Caco-2 (cell line): ENCODE measurements at regions of chr13 and their contacts with region 1.

Region 1: DNA sequence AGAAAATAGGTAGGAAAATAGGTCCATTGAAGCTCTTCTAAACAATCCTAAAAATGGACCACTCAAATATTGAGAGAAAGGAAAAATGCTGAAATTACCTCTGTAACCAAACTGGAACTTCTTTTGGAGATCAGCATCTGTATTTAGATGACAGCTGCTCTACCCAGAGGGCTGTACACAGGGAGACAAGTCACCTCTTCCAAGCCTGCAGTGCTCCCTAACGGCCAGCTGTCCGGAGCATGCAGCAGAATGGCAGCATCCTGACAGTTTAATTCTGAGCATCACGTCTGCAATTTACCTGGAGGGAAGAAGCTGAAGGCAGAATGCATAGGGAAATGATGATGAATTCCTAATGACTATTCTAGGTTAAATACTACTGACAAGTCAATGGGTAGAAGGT is 62.8 kb upstream of the DIAPH3 start:
- DNase-seq: peak; percentile 69 to 79
- H3K4me3 ChIP-seq: no peak overlapping the region
- H3K4me3 Mint-ChIP-seq: no peak overlapping the region
- H3K27ac Mint-ChIP-seq: no peak overlapping the region
- H3K4me1 ChIP-seq: peaks cover 25% of the 10 kb centered on the region
- H3K4me1 Mint-ChIP-seq: peaks cover 27% of the 10 kb centered on the region
- H3K27me3 ChIP-seq: no peaks in the 10 kb centered on the region
- H3K27me3 Mint-ChIP-seq: no peaks in the 10 kb centered on the region
- CTCF ChIP-seq: peak; percentile 55 to 76

Region 2: DNA sequence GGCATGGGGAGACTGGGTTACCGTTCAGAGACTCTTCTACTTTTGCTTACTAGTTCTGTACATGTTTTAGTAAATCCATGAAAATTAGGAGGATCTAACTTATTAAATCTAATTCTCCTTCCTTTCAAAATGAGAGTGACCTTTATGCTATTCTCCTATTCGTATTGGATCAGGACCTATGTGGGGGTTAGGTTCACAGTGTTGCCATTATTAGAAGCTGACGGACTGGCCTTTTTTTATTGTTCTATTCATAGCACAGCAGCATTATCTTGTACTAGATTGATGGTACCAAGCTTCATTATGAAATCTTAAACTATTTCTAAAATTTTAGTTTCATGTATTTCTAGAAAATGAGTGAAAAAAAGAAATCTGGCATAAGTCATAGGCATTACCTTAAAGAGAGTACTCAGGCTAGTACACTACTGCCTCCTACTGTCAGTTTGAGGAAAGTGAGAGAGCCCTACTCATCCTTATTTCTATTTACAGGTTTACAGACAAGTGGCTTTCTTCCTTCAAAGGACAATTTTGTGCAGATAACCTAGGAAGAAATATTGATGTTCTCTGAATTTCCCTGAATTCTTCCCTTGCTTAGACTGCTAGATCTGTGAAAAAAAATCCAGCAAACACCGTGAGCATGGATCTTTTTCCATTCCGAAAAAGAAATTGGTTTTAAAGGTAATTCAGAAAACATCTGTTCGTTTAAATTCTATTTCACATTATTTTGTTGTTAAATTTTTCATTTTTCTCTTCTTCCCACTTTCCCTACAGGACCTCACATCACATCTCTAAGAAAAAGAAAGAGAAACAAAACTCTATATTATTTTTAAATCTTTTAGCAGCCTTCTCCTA is 548.3 kb before region 1 on chr13:
- CTCF ChIA-PET with region 1: no interaction called
- POLR2A ChIA-PET with region 1: no interaction called
- intact Hi-C with region 1: loop called (anchors 1 kb)
- DNase-seq: peak in 1 of 2 experiments; percentile 51
- H3K4me3 ChIP-seq: no peak overlapping the region
- H3K4me3 Mint-ChIP-seq: no peak overlapping the region
- H3K27ac Mint-ChIP-seq: no peak overlapping the region
- H3K4me1 ChIP-seq: peaks cover 42% of the 10 kb centered on the region
- H3K4me1 Mint-ChIP-seq: peaks cover 6% of the 10 kb centered on the region
- H3K27me3 ChIP-seq: no peaks in the 10 kb centered on the region
- H3K27me3 Mint-ChIP-seq: no peaks in the 10 kb centered on the region
- CTCF ChIP-seq: peak; percentile 79 to 85

Region 3: DNA sequence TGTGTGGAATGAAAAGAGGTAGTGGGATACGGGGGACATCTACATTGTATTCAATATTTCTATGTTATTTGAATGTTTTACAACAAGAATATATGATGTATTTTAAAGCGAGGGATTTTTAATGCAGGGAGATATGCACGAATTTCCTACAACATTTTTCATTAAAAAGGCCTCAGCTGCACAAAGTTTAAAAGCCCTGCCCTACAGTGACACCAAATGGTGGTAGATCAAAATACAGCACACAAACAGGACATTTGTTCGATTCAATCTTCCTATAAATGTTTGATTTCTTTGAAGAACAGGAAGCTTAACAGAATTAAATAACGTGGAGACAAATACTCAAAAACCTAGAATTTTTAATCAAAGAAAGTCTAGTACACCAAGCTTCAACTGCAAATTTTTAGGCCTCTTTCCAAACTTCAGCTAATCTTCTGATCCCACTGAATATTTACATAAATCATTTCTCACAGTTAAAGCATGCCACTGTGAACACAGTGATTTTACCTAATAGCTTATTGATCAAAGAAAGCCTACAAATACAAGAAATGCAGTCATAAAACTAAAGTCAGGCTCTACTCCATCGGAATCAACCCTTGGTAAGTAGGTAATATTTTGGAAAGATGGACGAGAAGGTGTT is 320.0 kb before region 1 on chr13:
- CTCF ChIA-PET with region 1: no interaction called
- POLR2A ChIA-PET with region 1: no interaction called
- intact Hi-C with region 1: loop called (anchors 5 kb)
- DNase-seq: peak in 1 of 2 experiments; percentile 30
- H3K4me3 ChIP-seq: no peak overlapping the region
- H3K4me3 Mint-ChIP-seq: no peak overlapping the region
- H3K27ac Mint-ChIP-seq: no peak overlapping the region
- H3K4me1 ChIP-seq: peaks cover 11% of the 10 kb centered on the region; the same call in 1 of the 2 replicates
- H3K4me1 Mint-ChIP-seq: peaks cover 7% of the 10 kb centered on the region
- H3K27me3 ChIP-seq: no peaks in the 10 kb centered on the region
- H3K27me3 Mint-ChIP-seq: no peaks in the 10 kb centered on the region
- CTCF ChIP-seq: peak; percentile 66 to 67

Region 4: DNA sequence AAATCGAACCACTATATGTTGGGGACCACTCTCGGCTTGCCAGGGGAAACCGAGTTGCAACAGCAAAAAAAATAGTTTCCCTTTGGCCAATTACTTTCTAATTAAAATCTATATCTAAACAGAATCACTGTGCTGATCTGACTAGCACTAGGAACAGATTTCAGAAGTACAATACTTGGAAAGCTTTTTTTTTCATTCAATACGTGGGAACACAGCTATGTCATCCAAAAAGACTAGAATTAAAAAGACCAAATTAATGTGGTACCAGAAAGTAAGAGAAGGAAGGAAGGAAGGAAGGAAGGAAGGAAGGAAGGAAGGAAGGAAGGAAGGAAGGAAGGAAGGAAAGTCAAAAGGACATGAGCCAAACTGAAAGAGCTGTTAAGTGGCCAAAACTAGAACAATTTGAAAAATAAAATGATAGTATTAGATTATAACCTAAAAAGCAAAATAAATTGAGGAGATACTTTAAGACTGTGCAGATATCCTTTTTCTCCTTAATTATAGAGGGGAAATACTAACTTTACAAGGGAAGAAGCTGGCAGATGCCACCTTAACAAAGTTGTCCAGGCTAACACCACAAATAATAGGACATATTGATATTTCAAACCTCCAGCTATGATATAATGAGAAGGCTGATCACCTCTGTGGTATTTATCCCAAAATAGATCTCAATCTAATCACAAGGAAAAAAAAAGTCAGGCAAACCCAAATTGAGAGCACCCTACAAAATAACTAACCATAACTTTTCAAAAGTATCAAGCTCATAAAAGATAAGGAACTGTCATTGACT is 126.7 kb before region 1 on chr13:
- CTCF ChIA-PET with region 1: no interaction called
- POLR2A ChIA-PET with region 1: no interaction called
- intact Hi-C with region 1: no loop called
- DNase-seq: no peak
- H3K4me3 ChIP-seq: no peak overlapping the region
- H3K4me3 Mint-ChIP-seq: no peak overlapping the region
- H3K27ac Mint-ChIP-seq: no peak overlapping the region
- H3K4me1 ChIP-seq: peaks cover 18% of the 10 kb centered on the region
- H3K4me1 Mint-ChIP-seq: peaks cover 28% of the 10 kb centered on the region
- H3K27me3 ChIP-seq: no peaks in the 10 kb centered on the region
- H3K27me3 Mint-ChIP-seq: no peaks in the 10 kb centered on the region
- CTCF ChIP-seq: no peak

Region 5: GRCh38 chr13:60163478-60164233 is 62.9 kb before region 1 on chr13 and contains the start of gene DIAPH3:
- CTCF ChIA-PET with region 1: no interaction called
- POLR2A ChIA-PET with region 1: no interaction called
- intact Hi-C with region 1: loop called (anchors 1 kb)
- DNase-seq: peak; percentile 97 to 98
- H3K4me3 ChIP-seq: peak within 1 kb of the TSS; percentile 87
- H3K4me3 Mint-ChIP-seq: peak within 1 kb of the TSS; percentile 91
- H3K27ac Mint-ChIP-seq: peak within 1 kb of the TSS; percentile 86
- H3K4me1 ChIP-seq: peaks cover 54% of the 10 kb centered on the region
- H3K4me1 Mint-ChIP-seq: peaks cover 51% of the 10 kb centered on the region
- H3K27me3 ChIP-seq: no peaks in the 10 kb centered on the region
- H3K27me3 Mint-ChIP-seq: no peaks in the 10 kb centered on the region
- CTCF ChIP-seq: no peak
- total RNA-seq, gene DIAPH3: 59.4 and 60.6 TPM in 2 replicates

Region 6: GRCh38 chr13:60273927-60274527 is 47.5 kb after region 1 on chr13:
- CTCF ChIA-PET with region 1: no interaction called
- POLR2A ChIA-PET with region 1: no interaction called
- intact Hi-C with region 1: loop called (anchors 2 kb)
- DNase-seq: peak; percentile 72 to 79
- H3K4me3 ChIP-seq: no peak overlapping the region
- H3K4me3 Mint-ChIP-seq: peak overlapping the region; percentile 31
- H3K27ac Mint-ChIP-seq: peak overlapping the region; percentile 92
- H3K4me1 ChIP-seq: peaks cover 53% of the 10 kb centered on the region
- H3K4me1 Mint-ChIP-seq: peaks cover 33% of the 10 kb centered on the region
- H3K27me3 ChIP-seq: no peaks in the 10 kb centered on the region
- H3K27me3 Mint-ChIP-seq: no peaks in the 10 kb centered on the region
- CTCF ChIP-seq: no peak